Right lobe of liver (tissue), 6 donors: ENCODE measurements at regions of chr17 and their contacts with region 1.

Region 1: DNA sequence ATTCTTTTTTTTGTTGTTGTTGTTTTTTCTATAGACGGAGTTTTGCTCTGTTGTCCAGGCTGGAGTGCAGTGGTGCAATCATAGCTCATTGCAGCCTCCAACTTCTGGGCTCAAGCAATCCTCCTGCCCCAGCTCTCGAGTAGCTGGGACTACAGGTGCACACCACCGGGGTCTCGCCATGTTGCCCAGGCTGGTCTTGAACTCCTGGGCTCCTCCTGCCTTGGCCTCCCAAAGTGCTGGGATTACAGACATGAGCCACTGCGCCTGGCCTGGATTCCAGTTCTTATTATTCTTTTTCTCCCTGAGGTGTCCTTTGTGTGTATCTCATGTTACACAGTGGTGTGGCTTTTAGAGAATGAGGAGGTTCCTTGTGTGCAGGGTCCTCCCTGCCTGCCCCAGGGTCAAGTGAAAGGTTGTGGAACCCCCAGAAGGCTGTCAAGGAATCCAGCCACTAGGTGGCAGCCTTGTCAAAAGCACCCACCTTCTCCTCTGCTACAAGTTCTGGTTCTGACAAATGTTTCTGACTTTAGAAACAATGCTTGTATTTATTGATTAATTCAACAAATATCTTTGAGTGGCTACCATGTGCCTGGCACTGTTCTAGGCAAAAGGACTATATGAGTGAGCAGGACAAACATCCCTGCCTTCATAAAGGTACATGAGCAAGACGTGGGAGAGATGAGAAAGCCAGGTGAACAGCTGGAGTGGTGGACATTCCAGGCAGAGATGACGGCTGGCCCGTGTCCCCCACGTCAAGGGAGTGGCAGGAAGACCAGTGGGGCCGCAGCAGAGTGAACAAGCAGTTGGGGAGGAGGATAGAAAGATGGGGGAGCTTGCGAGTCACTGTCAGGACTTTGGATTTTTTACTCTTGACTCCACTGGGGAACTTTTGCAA is 112.4 kb downstream of the SPECC1 start:
- DNase-seq: peak in 2 of 3 donors; percentile 33 to 54
- ATAC-seq: peak; percentile 63 to 77 (median 69)
- H3K4me3 ChIP-seq: no peak overlapping the region
- H3K27ac ChIP-seq: no peak overlapping the region
- H3K4me1 ChIP-seq: no peaks in the 10 kb centered on the region
- H3K27me3 ChIP-seq: peaks cover 0 to 4% of the 10 kb centered on the region in 2 donors
- CTCF ChIP-seq: peak; percentile 59 to 89 (median 84)
- POLR2A ChIP-seq: no peak

Region 2: GRCh38 chr17:19992803-19993713 is 128.5 kb before region 1 on chr17:
- intact Hi-C with region 1: loop called in 1 of 2 experiments (anchors 10 kb)
- DNase-seq: peak; percentile 90 to 92 (median 91)
- ATAC-seq: peak; percentile 100
- H3K4me3 ChIP-seq: no peak overlapping the region
- H3K27ac ChIP-seq: no peak overlapping the region
- H3K4me1 ChIP-seq: no peaks in the 10 kb centered on the region
- H3K27me3 ChIP-seq: no peaks in the 10 kb centered on the region
- CTCF ChIP-seq: peak; percentile 71 to 79 (median 79)
- POLR2A ChIP-seq: no peak

Region 3: GRCh38 chr17:20009302-20010098 is 112.1 kb before region 1 on chr17 and contains the start of gene SPECC1:
- intact Hi-C with region 1: loop called in 1 of 2 experiments (anchors 10 kb)
- DNase-seq: peak; percentile 72 to 81 (median 77)
- ATAC-seq: peak; percentile 21 to 99 (median 96)
- H3K4me3 ChIP-seq: peak within 1 kb of the TSS; percentile 41 to 58 (median 46)
- H3K27ac ChIP-seq: no peak within 1 kb of the TSS
- H3K4me1 ChIP-seq: peaks cover 0 to 7% (median 0%) of the 10 kb centered on the region in 4 donors
- H3K27me3 ChIP-seq: peaks cover 0 to 11% of the 10 kb centered on the region in 2 donors
- CTCF ChIP-seq: peak; percentile 91 to 98 (median 97)
- POLR2A ChIP-seq: no peak
- total RNA-seq, gene SPECC1: 0.81 to 5.0 (median 2.8) TPM

Region 4: GRCh38 chr17:20053361-20053964 is 68.1 kb before region 1 on chr17:
- intact Hi-C with region 1: no loop called
- DNase-seq: no peak
- ATAC-seq: no peak
- H3K4me3 ChIP-seq: no peak overlapping the region
- H3K27ac ChIP-seq: no peak overlapping the region
- H3K4me1 ChIP-seq: no peaks in the 10 kb centered on the region
- H3K27me3 ChIP-seq: no peaks in the 10 kb centered on the region
- CTCF ChIP-seq: no peak
- POLR2A ChIP-seq: no peak